GM10248 (cell line): ENCODE measurements at regions of chr2 and their contacts with region 1.

Region 1: GRCh38 chr2:30231212-30231995 is at the start of gene LBH:
- DNase-seq: peak; percentile 92
- CTCF ChIP-seq: peak; percentile 28

Region 2: DNA sequence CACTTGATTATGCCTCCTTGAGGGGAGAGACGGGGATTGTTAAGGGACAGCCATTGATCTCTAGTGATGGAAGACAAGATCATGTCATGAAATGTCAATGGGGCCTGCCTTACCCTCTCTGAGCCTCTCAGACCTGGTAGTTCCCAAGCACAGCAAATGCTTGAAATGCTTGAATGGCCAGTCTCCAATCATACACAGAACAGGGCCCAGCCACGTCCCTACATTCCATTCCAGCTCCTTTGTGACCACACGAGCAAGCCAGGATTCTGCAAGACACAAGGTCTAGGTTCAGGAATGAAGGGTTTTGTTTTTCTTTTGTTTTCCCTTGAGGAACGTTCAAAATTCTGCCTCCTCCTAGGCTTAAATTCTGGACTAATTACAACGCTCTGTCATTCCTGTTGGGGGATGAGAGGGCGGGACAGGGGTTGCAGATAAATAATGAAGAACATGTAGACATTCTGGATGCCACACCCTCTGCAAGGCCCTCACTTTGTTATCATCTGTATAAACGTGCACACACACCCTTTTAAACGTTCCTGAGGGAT is 182.7 kb before region 1 on chr2:
- CTCF ChIA-PET with region 1: no interaction called
- POLR2A ChIA-PET with region 1: no interaction called
- DNase-seq: no peak
- CTCF ChIP-seq: no peak

Region 3: GRCh38 chr2:30217644-30218337 is 13.6 kb before region 1 on chr2:
- CTCF ChIA-PET with region 1: interaction called, 18 read pairs
- POLR2A ChIA-PET with region 1: interaction called, 14 read pairs
- DNase-seq: no peak
- CTCF ChIP-seq: no peak

Region 4: GRCh38 chr2:30282086-30282485 is 50.7 kb after region 1 on chr2:
- CTCF ChIA-PET with region 1: interaction called, 3 read pairs
- POLR2A ChIA-PET with region 1: interaction called, 23 read pairs
- DNase-seq: no peak
- CTCF ChIP-seq: no peak

Region 5: DNA sequence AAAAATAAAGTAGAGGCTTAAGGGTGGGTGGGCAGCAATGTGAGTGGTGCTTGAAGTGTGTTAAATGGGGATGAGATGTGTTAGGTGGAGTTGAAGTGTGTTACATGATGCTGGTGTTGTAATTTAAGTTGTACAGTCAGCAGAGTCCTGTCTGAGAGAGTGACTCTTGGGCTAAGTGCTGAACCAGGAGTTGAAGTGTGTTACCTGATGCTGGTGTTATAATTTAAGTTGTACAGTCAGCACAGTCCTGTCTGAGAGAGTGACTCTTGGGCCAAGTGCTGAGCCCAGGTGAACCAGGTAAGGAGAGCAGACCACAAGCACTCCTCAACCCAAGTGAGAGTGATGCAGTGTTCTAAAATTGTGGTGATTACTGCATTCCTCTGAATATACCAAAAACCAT is 256.2 kb after region 1 on chr2:
- CTCF ChIA-PET with region 1: no interaction called
- POLR2A ChIA-PET with region 1: interaction called, 10 read pairs
- DNase-seq: no peak
- CTCF ChIP-seq: no peak